ENCODE measurements at regions of chr7 and their contacts with region 1.

Region 1: DNA sequence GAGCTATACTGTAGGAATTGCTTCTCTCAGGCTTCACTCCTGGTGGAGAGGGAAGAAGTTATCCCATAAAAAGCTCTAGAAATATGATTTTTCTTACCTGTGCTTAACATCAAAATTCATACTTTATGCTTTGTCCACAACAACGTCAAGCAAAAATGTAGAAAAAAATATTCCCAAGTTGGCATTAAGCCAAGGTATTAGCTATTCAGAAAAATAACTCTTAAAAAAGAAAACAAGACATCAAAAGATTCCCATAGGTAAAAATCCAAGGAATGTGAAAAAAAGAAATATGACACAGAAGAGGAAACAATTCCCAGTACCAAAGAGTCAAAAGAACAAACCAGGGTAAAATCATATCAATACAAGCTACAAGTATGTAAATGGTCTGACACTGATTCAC is 311.6 kb upstream of the VWC2 start:
- DNase-seq: no peak
- ATAC-seq: no peak
- H3K4me3 ChIP-seq: no peak overlapping the region
- H3K27ac ChIP-seq: no peak overlapping the region
- H3K4me1 ChIP-seq: no peaks in the 10 kb centered on the region
- H3K27me3 ChIP-seq: peaks cover 17% of the 10 kb centered on the region
- CTCF ChIP-seq: no peak

Region 2: GRCh38 chr7:49228426-49229098 is 233.3 kb before region 1 on chr7:
- CTCF ChIA-PET with region 1: no interaction called
- POLR2A ChIA-PET with region 1: no interaction called
- intact Hi-C with region 1: no loop called
- DNase-seq: no peak
- ATAC-seq: no peak
- H3K4me3 ChIP-seq: no peak overlapping the region
- H3K27ac ChIP-seq: no peak overlapping the region
- H3K4me1 ChIP-seq: no peaks in the 10 kb centered on the region
- H3K27me3 ChIP-seq: peaks cover 6% of the 10 kb centered on the region; the same call in 1 of the 2 replicates
- CTCF ChIP-seq: no peak

Region 3: DNA sequence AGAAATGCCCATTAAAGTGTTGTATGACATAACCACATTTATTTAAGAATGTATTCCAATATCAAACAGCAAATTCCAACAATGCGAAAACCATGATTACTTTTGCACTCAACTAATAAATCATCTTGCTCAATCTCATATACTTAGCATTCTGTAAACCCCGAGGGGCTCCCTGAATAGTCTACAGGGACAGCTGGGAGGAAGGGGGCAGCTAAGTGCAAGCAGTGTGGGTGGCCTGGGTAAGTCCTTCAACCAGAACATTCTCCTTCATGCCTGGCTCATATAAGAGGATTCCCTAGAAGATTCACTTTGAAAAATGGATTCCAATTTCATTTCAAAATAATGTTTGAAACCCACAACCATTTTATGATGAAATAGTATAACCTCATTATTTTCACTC is 182.0 kb before region 1 on chr7:
- CTCF ChIA-PET with region 1: no interaction called
- POLR2A ChIA-PET with region 1: no interaction called
- intact Hi-C with region 1: loop called (anchors 10 kb)
- DNase-seq: no peak
- ATAC-seq: no peak
- H3K4me3 ChIP-seq: no peak overlapping the region
- H3K27ac ChIP-seq: no peak overlapping the region
- H3K4me1 ChIP-seq: no peaks in the 10 kb centered on the region
- H3K27me3 ChIP-seq: peaks cover 73% of the 10 kb centered on the region
- CTCF ChIP-seq: no peak

Region 4: DNA sequence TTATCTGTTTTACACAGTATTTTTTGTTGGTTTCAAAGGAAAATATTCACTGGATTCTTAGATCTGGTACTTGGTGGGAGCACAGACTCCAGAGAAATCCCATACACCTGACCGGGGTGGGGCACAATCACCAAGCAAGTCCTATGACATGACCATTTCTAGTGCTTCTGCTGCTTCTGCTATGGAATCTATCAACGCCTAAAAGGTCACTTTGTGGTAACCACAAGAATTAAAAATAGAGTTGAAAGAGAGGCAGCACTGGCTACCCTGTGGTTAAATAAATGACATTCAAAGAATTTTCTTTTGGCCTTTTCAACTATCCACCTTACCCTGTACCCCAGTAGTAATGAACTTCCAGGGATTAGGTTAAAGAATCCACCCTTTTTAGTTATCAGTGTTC is 18.3 kb before region 1 on chr7:
- CTCF ChIA-PET with region 1: no interaction called
- POLR2A ChIA-PET with region 1: no interaction called
- intact Hi-C with region 1: no loop called
- DNase-seq: no peak
- ATAC-seq: no peak
- H3K4me3 ChIP-seq: no peak overlapping the region
- H3K27ac ChIP-seq: no peak overlapping the region
- H3K4me1 ChIP-seq: no peaks in the 10 kb centered on the region
- H3K27me3 ChIP-seq: no peaks in the 10 kb centered on the region
- CTCF ChIP-seq: no peak

Region 5: DNA sequence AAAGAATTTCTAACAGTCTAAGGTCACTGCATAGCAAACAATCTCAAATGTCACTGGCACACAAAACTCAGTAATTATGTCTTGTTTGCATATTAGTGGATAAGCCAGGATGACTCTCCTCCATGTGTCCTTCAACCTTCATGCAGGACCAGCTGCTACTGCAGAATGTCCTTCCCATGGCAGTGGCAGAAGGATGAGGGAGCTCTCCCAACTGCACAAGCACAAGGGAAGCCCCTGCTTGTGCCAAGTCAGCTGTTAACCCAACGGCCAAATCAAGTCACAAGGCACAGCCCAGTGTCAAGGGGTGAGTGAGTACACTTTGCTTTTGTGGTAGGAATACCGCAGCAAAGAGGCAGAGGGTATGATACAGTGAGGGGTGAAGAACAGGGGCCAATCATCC is 252.3 kb after region 1 on chr7:
- CTCF ChIA-PET with region 1: no interaction called
- POLR2A ChIA-PET with region 1: interaction called, 14 read pairs
- intact Hi-C with region 1: no loop called
- DNase-seq: no peak
- ATAC-seq: no peak
- H3K4me3 ChIP-seq: no peak overlapping the region
- H3K27ac ChIP-seq: no peak overlapping the region
- H3K4me1 ChIP-seq: no peaks in the 10 kb centered on the region
- H3K27me3 ChIP-seq: peaks cover 21% of the 10 kb centered on the region; the same call in 1 of the 2 replicates
- CTCF ChIP-seq: no peak